HCT116 (cell line): ENCODE measurements at regions of chr16 and their contacts with region 1.

Region 1: GRCh38 chr16:85615852-85616606 is 2.9 kb downstream of the GSE1 start:
- DNase-seq: peak; percentile 48
- ATAC-seq: no peak
- H3K4me3 ChIP-seq: peak overlapping the region; percentile 85 to 91
- H3K27ac ChIP-seq: peak overlapping the region; percentile 90
- H3K4me1 ChIP-seq: peaks cover 18 to 52% of the 10 kb centered on the region in 2 experiments
- H3K27me3 ChIP-seq: no peaks in the 10 kb centered on the region
- CTCF ChIP-seq: peak in 2 of 3 experiments; percentile 99; a peak in 4 of 6 replicates
- POLR2A ChIP-seq: no peak
- RAD21 ChIP-seq: no peak

Region 2: GRCh38 chr16:85369741-85370528 is 246.1 kb before region 1 on chr16:
- CTCF ChIA-PET with region 1: interaction called, 4 read pairs
- POLR2A ChIA-PET with region 1: no interaction called
- RAD21 ChIA-PET with region 1: no interaction called
- intact Hi-C with region 1: loop called (anchors 1 kb)
- DNase-seq: no peak
- ATAC-seq: peak; percentile 87
- H3K4me3 ChIP-seq: no peak overlapping the region
- H3K27ac ChIP-seq: no peak overlapping the region
- H3K4me1 ChIP-seq: peaks cover 23 to 38% of the 10 kb centered on the region in 2 experiments
- H3K27me3 ChIP-seq: no peaks in the 10 kb centered on the region
- CTCF ChIP-seq: peak; percentile 80 to 97 (median 97); a peak in 5 of 6 replicates
- POLR2A ChIP-seq: no peak
- RAD21 ChIP-seq: no peak; the same call in 1 of the 2 replicates

Region 3: DNA sequence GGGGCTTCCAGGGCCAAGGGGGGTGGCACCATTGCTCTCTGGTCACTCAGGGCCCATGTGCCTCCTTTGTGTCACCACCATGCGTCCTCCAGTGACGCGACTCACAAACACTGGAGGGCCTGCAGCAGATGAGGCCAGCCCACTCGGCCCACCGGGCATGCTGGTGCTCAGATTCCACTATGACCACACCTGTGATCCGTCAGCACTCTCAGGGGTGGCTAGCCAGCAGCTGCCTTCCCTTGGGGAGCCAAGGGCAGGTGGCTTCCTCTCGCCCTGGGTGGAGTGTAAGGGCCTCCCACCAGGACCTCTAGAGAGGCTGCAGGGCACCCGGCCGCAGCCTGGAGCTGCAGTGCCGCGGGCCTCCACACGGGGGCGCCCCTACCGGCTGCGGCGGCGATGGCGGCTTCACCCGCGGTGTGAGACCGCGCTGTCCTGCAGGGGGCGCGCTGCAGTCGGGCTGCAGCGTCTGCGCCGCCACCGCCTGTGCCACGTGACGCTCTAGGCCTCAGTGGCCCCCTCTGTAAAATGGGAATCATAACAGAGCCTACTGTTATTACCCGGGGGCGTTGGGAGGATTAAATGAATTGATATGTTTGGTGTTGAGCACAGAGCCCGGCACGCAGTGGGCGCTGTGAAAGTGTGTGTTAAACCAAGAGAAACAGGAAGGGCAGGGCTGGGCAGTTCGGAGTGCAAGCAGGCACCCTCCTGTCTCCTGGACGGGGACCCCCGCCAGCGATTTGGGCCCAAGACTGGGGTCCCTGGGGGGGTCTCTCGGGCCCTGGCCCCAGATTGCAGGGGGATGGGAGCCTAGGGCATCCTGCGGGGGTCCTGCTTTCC is 195.3 kb before region 1 on chr16:
- CTCF ChIA-PET with region 1: interaction called, 27 read pairs
- POLR2A ChIA-PET with region 1: interaction called, 4 read pairs
- RAD21 ChIA-PET with region 1: interaction called, 4 to 10 read pairs
- intact Hi-C with region 1: no loop called
- DNase-seq: peak; percentile 49
- ATAC-seq: peak; percentile 76
- H3K4me3 ChIP-seq: no peak overlapping the region
- H3K27ac ChIP-seq: no peak overlapping the region
- H3K4me1 ChIP-seq: peaks cover 8 to 16% of the 10 kb centered on the region in 2 experiments
- H3K27me3 ChIP-seq: no peaks in the 10 kb centered on the region
- CTCF ChIP-seq: peak; percentile 100
- POLR2A ChIP-seq: no peak
- RAD21 ChIP-seq: peak; percentile 98

Region 4: DNA sequence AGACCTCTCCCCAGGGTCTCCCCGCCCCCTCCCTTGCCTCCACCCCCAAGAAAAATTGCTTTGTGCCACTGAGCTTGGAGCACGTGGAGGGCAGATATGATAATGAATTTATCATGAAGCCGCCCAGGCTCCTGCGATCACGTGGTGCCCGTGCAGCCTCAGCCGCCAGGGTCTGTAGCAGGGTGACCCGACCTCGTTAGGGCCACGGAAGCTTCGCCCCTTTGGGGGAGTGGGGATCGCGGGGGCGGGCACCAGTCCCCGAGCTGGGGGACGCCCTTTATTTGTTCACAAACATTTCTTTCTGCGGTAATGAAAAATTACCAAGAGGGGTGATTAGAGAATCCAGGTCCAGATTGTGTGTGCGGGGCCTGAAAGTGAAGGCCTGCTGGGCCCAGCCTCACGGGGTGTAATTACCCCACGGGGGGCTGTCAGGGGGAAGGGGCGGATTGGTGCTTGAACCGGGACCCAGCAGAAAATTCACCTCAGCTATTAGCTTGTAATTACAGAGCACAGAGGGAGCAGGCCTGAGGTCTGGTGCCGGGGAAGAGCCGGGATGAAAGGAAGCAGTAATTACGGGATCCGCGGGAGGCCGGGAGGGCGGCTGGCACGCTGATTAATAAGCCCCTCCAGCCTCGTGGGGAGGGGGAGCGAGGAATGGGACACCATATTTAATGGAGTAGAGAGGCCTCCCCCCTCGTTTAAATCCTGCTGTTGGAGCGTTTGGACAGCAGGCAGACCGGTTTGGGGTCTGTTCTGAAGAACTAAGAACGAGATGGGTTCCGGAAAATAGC is 10.4 kb after region 1 on chr16:
- CTCF ChIA-PET with region 1: interaction called, 28 read pairs
- POLR2A ChIA-PET with region 1: interaction called, 3 read pairs
- RAD21 ChIA-PET with region 1: no interaction called
- intact Hi-C with region 1: no loop called
- DNase-seq: no peak
- ATAC-seq: no peak
- H3K4me3 ChIP-seq: no peak overlapping the region
- H3K27ac ChIP-seq: no peak overlapping the region
- H3K4me1 ChIP-seq: peaks cover 0 to 7% of the 10 kb centered on the region in 2 experiments; a peak in 2 of 4 replicates
- H3K27me3 ChIP-seq: no peaks in the 10 kb centered on the region
- CTCF ChIP-seq: no peak
- POLR2A ChIP-seq: no peak
- RAD21 ChIP-seq: no peak

Region 5: DNA sequence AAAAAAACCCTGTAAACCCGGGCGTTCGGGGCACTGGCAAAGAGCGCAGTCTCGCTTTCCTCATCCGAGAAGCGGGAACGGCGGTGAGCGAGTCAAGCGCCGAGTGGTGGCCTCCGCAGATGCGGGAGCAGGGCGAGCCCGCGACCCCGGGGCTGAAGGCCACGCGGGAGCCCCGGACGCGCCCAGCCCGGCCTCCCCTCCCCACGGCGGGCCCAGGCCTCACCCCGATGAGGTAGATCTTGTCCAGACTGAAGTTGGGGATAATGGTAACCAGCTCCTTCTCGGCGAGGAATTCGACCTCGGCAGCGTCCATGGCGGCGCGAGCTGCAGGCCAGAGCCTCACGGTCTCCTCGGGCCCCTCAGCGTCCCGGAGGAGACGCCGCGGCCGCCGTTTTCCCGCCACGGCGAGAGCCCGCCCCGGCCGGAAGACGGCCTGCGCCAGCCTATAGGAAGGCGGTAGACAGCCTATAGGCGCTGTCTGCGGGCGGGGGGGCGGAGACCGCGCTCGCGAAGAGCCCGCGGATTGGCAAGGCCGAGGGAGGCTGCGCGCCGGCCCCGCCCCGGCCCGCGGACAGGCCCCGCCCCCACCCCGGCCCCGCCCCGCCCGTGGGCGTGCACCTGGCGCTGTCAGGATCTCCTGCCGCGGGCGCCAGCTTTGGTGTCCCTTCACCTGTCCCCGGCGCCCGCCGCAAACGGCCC is 72.7 kb after region 1 on chr16 and contains the start of gene GINS2:
- CTCF ChIA-PET with region 1: no interaction called
- POLR2A ChIA-PET with region 1: no interaction called
- RAD21 ChIA-PET with region 1: no interaction called
- intact Hi-C with region 1: loop called (anchors 2 kb)
- DNase-seq: peak; percentile 77
- ATAC-seq: peak; percentile 99
- H3K4me3 ChIP-seq: peak within 1 kb of the TSS; percentile 63 to 91
- H3K27ac ChIP-seq: peak within 1 kb of the TSS; percentile 52
- H3K4me1 ChIP-seq: peaks cover 14 to 24% of the 10 kb centered on the region in 2 experiments
- H3K27me3 ChIP-seq: no peaks in the 10 kb centered on the region
- CTCF ChIP-seq: no peak
- POLR2A ChIP-seq: peak; percentile 58
- RAD21 ChIP-seq: no peak
- total RNA-seq, gene GINS2: 53.3 TPM

Region 6: GRCh38 chr16:85735225-85735635 is 119.2 kb after region 1 on chr16:
- CTCF ChIA-PET with region 1: no interaction called
- POLR2A ChIA-PET with region 1: no interaction called
- RAD21 ChIA-PET with region 1: no interaction called
- intact Hi-C with region 1: no loop called
- DNase-seq: no peak
- ATAC-seq: no peak
- H3K4me3 ChIP-seq: no peak overlapping the region
- H3K27ac ChIP-seq: no peak overlapping the region
- H3K4me1 ChIP-seq: no peaks in the 10 kb centered on the region
- H3K27me3 ChIP-seq: no peaks in the 10 kb centered on the region
- CTCF ChIP-seq: no peak
- POLR2A ChIP-seq: no peak
- RAD21 ChIP-seq: no peak

Region 7: GRCh38 chr16:85935974-85936760 is 320.1 kb after region 1 on chr16:
- CTCF ChIA-PET with region 1: no interaction called
- POLR2A ChIA-PET with region 1: no interaction called
- RAD21 ChIA-PET with region 1: no interaction called
- intact Hi-C with region 1: no loop called
- DNase-seq: no peak
- ATAC-seq: no peak
- H3K4me3 ChIP-seq: no peak overlapping the region
- H3K27ac ChIP-seq: no peak overlapping the region
- H3K4me1 ChIP-seq: no peaks in the 10 kb centered on the region
- H3K27me3 ChIP-seq: peaks cover 32% of the 10 kb centered on the region; the same call in 1 of the 2 replicates
- CTCF ChIP-seq: no peak
- POLR2A ChIP-seq: no peak
- RAD21 ChIP-seq: no peak

Region 8: DNA sequence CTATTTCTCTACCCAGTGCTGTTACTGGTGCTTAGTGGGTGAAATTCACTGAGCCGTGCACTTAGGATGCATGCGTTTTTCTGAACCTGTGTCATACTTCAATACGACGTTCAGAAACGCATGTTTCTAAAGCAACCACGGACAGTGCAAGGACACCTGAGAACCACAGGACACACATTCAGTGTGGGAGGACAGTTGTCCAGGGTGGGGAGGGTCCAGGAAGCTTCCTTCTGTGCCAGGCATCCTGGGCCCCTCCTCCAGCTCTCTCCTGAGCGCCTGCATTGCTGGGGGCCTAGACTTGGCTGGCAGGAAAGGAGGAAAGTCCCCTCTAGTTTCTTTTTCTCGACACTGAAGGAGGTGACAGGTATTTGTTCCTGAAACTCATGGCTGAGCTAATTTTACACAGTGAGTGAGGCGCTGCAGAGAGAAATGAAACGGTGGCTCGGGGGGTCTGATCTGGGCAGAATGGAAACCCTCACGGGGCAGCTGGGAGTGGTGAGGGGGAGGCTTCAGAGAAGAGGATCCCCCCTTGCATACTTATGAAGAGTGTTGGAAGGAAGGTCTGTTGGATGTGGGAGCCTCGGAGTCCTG is 372.8 kb after region 1 on chr16:
- CTCF ChIA-PET with region 1: no interaction called
- POLR2A ChIA-PET with region 1: no interaction called
- RAD21 ChIA-PET with region 1: no interaction called
- intact Hi-C with region 1: no loop called
- DNase-seq: no peak
- ATAC-seq: no peak
- H3K4me3 ChIP-seq: no peak overlapping the region
- H3K27ac ChIP-seq: no peak overlapping the region
- H3K4me1 ChIP-seq: no peaks in the 10 kb centered on the region
- H3K27me3 ChIP-seq: peaks cover 70% of the 10 kb centered on the region
- CTCF ChIP-seq: no peak
- POLR2A ChIP-seq: no peak
- RAD21 ChIP-seq: no peak

Region 9: GRCh38 chr16:86984991-86985647 is 1369.1 kb after region 1 on chr16:
- CTCF ChIA-PET with region 1: no interaction called
- POLR2A ChIA-PET with region 1: no interaction called
- RAD21 ChIA-PET with region 1: no interaction called
- intact Hi-C with region 1: no loop called
- DNase-seq: no peak
- ATAC-seq: no peak
- H3K4me3 ChIP-seq: no peak overlapping the region
- H3K27ac ChIP-seq: no peak overlapping the region
- H3K4me1 ChIP-seq: no peaks in the 10 kb centered on the region
- H3K27me3 ChIP-seq: peaks cover 9% of the 10 kb centered on the region; the same call in 1 of the 2 replicates
- CTCF ChIP-seq: no peak
- POLR2A ChIP-seq: no peak
- RAD21 ChIP-seq: no peak